Cardiac septum (tissue), 1 donor: ENCODE measurements at regions of chr19 and their contacts with region 1.

Region 1: GRCh38 chr19:1269478-1270212 is 513 bp downstream of the CIRBP start:
- DNase-seq: peak; percentile 94

Region 2: GRCh38 chr19:1205114-1206062 is 64.3 kb before region 1 on chr19 and contains the start of gene STK11:
- intact Hi-C with region 1: no loop called
- DNase-seq: peak; percentile 100
- total RNA-seq, gene STK11: 49.7 TPM

Region 3: GRCh38 chr19:1223018-1223855 is 46.4 kb before region 1 on chr19:
- intact Hi-C with region 1: loop called (anchors 1 kb)
- DNase-seq: no peak

Region 4: DNA sequence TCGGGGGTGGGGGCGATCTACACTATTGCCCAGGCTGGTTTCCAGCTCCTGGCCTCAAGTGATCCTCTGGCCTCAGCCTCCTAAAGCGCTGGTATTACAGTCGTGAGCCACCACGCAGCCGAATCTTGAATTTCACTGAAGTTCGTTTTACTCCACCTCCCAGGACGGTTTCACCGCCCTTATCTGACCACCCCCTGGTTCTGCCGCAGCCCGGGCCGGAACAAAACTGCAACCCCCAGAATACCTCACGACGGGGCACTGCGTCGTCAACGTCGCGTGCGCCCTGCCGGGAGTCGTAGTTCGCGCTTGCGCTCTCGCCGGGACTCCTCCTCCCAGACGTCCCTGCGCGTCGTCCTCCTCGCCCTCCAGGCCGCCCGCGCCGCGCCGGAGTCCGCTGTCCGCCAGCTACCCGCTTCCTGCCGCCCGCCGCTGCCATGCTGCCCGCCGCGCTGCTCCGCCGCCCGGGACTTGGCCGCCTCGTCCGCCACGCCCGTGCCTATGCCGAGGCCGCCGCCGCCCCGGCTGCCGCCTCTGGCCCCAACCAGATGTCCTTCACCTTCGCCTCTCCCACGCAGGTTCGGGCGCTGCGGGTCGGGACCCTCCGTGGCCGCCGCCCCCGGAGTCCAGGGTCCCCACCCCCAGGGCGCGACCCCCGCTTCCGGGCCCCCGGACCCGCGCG is 28.1 kb before region 1 on chr19 and contains the start of gene ATP5F1D:
- intact Hi-C with region 1: loop called (anchors 1 kb)
- DNase-seq: peak; percentile 98
- total RNA-seq, gene ATP5F1D: 486 TPM

Region 5: DNA sequence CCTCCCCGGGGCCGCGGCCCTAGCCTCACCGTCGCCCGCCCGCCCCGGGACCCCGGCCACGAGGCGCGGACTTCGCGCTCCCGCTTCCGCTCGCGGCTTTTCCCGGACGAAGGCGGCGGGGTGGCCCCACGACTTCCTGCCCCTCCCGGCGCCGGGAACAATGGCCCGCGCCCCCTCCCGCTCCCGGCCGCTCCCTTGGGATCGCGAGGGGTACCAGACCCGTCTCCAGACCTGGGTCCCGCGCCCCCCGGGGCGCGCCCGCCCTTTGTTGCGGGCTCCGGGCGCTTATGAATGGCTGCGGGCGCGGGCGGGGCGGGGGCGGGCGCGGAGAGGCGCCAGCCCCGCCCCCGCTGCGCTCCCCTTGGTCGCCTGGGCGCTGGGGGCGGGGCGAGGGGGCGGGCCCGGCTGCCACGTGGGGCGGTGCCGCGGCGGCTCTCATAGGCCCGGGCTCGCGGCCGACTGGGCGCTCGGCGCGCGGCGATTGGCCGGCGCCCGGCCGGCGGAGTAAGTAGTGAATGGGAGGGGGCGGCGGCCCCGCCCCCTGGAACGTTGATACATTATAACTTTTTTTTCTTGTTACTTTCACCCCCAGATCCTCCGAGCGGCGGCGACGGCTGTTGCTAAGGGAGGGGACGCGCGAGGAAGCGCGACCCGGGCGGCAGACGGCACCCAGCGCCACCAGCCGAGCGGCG is 20.2 kb before region 1 on chr19:
- intact Hi-C with region 1: loop called (anchors 1 kb)
- DNase-seq: peak; percentile 96

Region 6: GRCh38 chr19:1383311-1384084 is 113.9 kb after region 1 on chr19 and contains the start of gene NDUFS7:
- intact Hi-C with region 1: loop called (anchors 5 kb)
- DNase-seq: peak; percentile 94
- total RNA-seq, gene NDUFS7: 233 TPM

Region 7: GRCh38 chr19:1429750-1430149 is 160.1 kb after region 1 on chr19:
- intact Hi-C with region 1: no loop called
- DNase-seq: no peak

Region 8: GRCh38 chr19:1608359-1609102 is 338.9 kb after region 1 on chr19:
- intact Hi-C with region 1: no loop called
- DNase-seq: no peak

Region 9: GRCh38 chr19:1624458-1624857 is 354.8 kb after region 1 on chr19:
- intact Hi-C with region 1: no loop called
- DNase-seq: no peak